BJ (cell line): ENCODE measurements at regions of chr14 and their contacts with region 1.

Region 1: GRCh38 chr14:94051115-94051514 is 25.0 kb downstream of the OTUB2 start:
- DNase-seq: no peak
- H3K4me3 ChIP-seq: no peak overlapping the region
- H3K27me3 ChIP-seq: no peaks in the 10 kb centered on the region
- CTCF ChIP-seq: peak; percentile 52

Region 2: DNA sequence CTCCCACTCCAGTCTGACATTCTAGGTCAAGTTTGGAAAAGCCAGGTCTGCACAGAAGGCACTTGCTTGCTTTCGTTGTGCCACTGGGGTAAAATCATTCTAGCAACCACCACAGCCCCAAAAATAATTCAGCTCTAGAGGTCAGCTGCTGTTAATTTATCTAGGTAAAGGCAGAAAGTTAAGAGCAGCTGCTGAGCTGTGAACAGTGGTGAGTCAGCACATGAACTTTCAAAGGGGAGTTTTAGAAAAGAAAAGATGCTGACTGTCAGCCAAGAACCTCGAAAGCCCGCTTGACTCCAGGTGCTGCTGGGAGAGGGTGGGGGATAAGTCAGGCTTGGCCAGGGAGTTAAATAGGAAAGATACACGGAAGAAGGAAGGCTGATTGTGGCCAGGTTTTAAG is 41.3 kb before region 1 on chr14:
- CTCF ChIA-PET with region 1: no interaction called
- POLR2A ChIA-PET with region 1: no interaction called
- DNase-seq: no peak
- H3K4me3 ChIP-seq: no peak overlapping the region
- H3K27me3 ChIP-seq: peaks cover 5% of the 10 kb centered on the region
- CTCF ChIP-seq: no peak

Region 3: GRCh38 chr14:94129111-94129757 is 78.1 kb after region 1 on chr14 and contains the start of gene IFI27L2:
- CTCF ChIA-PET with region 1: interaction called, 51 read pairs
- POLR2A ChIA-PET with region 1: no interaction called
- DNase-seq: no peak
- H3K4me3 ChIP-seq: peak within 1 kb of the TSS; percentile 60
- H3K27me3 ChIP-seq: no peaks in the 10 kb centered on the region
- CTCF ChIP-seq: peak; percentile 48
- polyA plus RNA-seq, gene IFI27L2: 122 and 201 TPM in 2 replicates